ENCODE measurements at regions of chr15 and their contacts with region 1.

Region 1: DNA sequence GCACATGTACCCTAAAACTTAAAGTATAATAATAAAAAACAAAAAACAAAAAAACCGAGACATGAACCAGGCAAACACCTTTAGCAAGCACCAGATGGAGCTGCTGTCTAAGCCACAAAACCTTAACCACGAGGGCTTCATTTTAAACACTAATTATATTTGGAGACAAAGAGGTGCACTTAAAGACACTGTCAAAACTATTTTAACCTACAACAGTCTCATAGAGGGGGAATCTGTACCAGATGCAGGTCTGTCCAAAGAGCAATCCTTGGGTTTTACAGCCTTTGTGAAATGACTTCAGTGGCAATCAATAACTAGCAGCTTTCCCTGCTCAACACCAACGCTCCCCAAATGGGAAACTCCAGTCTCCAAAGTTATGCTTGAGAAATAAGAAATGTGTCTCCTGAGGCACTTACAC is 115.7 kb upstream of the TSPAN3 start:
- DNase-seq: no peak
- H3K4me3 ChIP-seq: no peak overlapping the region
- H3K27ac ChIP-seq: peak overlapping the region; percentile 45 to 90 (median 82)
- H3K4me1 ChIP-seq: peaks cover 27 to 92% (median 70%) of the 10 kb centered on the region in 6 donors
- H3K27me3 ChIP-seq: no peaks in the 10 kb centered on the region
- CTCF ChIP-seq: peak; percentile 21 to 72 (median 51)
- POLR2A ChIP-seq: no peak

Region 2: GRCh38 chr15:77496710-77497103 is 310.1 kb after region 1 on chr15:
- intact Hi-C with region 1: loop called (anchors 5 kb)
- DNase-seq: peak; percentile 92
- H3K4me3 ChIP-seq: no peak overlapping the region
- H3K27ac ChIP-seq: peak overlapping the region in 7 of 8 donors; percentile 67 to 86 (median 80)
- H3K4me1 ChIP-seq: peaks cover 24 to 74% (median 54%) of the 10 kb centered on the region in 6 donors
- H3K27me3 ChIP-seq: no peaks in the 10 kb centered on the region
- CTCF ChIP-seq: peak; percentile 72 to 93 (median 87)
- POLR2A ChIP-seq: no peak